GM12878 (cell line): ENCODE measurements at regions of chr16 and their contacts with region 1.

Region 1: GRCh38 chr16:58853854-58854791 is 120.0 kb upstream of the GOT2 start:
- DNase-seq: peak; percentile 46
- ATAC-seq: peak; percentile 93
- H3K4me3 ChIP-seq: no peak overlapping the region
- H3K27ac ChIP-seq: peak overlapping the region; percentile 50
- H3K4me1 ChIP-seq: peaks cover 7% of the 10 kb centered on the region
- H3K27me3 ChIP-seq: no peaks in the 10 kb centered on the region
- CTCF ChIP-seq: no peak
- EP300 ChIP-seq: peak in 1 of 2 experiments; percentile 48; a peak in 1 of 4 replicates
- POLR2A ChIP-seq: no peak
- RAD21 ChIP-seq: no peak

Region 2: GRCh38 chr16:58789351-58789750 is 64.8 kb before region 1 on chr16:
- CTCF ChIA-PET with region 1: no interaction called
- POLR2A ChIA-PET with region 1: no interaction called
- RAD21 ChIA-PET with region 1: no interaction called
- SMC1A ChIA-PET with region 1: no interaction called
- in situ Hi-C with region 1: no loop called
- intact Hi-C with region 1: no loop called
- DNase-seq: no peak
- ATAC-seq: no peak
- H3K4me3 ChIP-seq: no peak overlapping the region
- H3K27ac ChIP-seq: no peak overlapping the region
- H3K4me1 ChIP-seq: no peaks in the 10 kb centered on the region
- H3K27me3 ChIP-seq: no peaks in the 10 kb centered on the region
- CTCF ChIP-seq: no peak
- EP300 ChIP-seq: no peak
- POLR2A ChIP-seq: no peak
- RAD21 ChIP-seq: no peak

Region 3: DNA sequence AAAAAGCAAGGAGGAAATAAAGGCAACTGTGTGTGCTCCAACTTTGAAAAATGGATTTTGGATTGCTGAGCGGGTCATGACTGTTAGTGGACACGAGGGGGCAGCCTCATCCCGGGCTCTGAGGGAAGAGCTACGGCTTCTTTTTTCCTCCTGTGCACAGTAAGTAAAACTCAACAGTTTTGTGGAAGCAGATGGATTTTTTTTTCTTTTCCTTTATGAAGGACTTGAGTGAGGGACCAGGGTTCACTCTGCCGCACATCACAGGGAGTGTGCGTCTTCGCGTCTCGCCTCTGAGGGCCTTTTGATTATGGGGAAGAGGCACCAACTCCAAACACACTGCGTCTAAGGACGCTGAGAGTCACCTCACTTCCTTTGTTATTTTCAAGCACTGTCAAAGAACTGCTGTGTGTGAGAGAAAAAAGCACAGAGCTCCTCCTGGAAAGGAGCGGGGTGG is 39.7 kb before region 1 on chr16:
- CTCF ChIA-PET with region 1: interaction called, 11 read pairs
- POLR2A ChIA-PET with region 1: no interaction called
- RAD21 ChIA-PET with region 1: interaction called, 3 read pairs
- SMC1A ChIA-PET with region 1: interaction called, 5 read pairs
- in situ Hi-C with region 1: no loop called
- intact Hi-C with region 1: no loop called
- DNase-seq: no peak
- ATAC-seq: peak; percentile 87
- H3K4me3 ChIP-seq: no peak overlapping the region
- H3K27ac ChIP-seq: no peak overlapping the region
- H3K4me1 ChIP-seq: no peaks in the 10 kb centered on the region
- H3K27me3 ChIP-seq: no peaks in the 10 kb centered on the region
- CTCF ChIP-seq: peak; percentile 85 to 88 (median 88)
- EP300 ChIP-seq: no peak
- POLR2A ChIP-seq: no peak
- RAD21 ChIP-seq: peak; percentile 88

Region 4: GRCh38 chr16:58882292-58882691 is 28.2 kb after region 1 on chr16:
- CTCF ChIA-PET with region 1: interaction called, 44 read pairs
- POLR2A ChIA-PET with region 1: interaction called, 15 read pairs
- RAD21 ChIA-PET with region 1: interaction called, 76 read pairs
- SMC1A ChIA-PET with region 1: interaction called, 124 read pairs
- in situ Hi-C with region 1: no loop called
- intact Hi-C with region 1: loop called (anchors 1 kb)
- DNase-seq: peak; percentile 31
- ATAC-seq: peak; percentile 96
- H3K4me3 ChIP-seq: no peak overlapping the region
- H3K27ac ChIP-seq: no peak overlapping the region
- H3K4me1 ChIP-seq: peaks cover 5% of the 10 kb centered on the region; the same call in 1 of the 2 replicates
- H3K27me3 ChIP-seq: no peaks in the 10 kb centered on the region
- CTCF ChIP-seq: no peak
- EP300 ChIP-seq: peak in 1 of 2 experiments; percentile 69; a peak in 1 of 4 replicates
- POLR2A ChIP-seq: no peak
- RAD21 ChIP-seq: no peak

Region 5: DNA sequence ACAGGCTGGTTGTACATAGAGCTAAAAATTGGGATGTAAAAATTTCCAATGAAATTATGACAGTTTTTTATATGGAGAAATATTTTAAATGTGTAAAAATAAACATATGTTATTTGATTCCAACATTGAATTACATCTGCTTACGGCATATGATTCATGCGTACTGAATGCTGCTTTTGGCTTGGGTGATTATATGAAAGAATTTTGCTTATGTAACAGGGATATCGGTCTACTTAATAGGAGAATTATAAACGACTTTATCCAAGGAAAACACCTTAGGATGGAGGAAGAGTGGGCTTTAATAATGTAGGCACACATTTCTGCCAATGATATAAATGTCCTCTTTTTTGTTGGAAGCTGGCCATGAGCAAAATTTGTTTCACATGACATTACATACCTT is 77.3 kb after region 1 on chr16:
- CTCF ChIA-PET with region 1: no interaction called
- POLR2A ChIA-PET with region 1: no interaction called
- RAD21 ChIA-PET with region 1: interaction called, 4 read pairs
- SMC1A ChIA-PET with region 1: interaction called, 11 read pairs
- in situ Hi-C with region 1: no loop called
- intact Hi-C with region 1: no loop called
- DNase-seq: no peak
- ATAC-seq: no peak
- H3K4me3 ChIP-seq: no peak overlapping the region
- H3K27ac ChIP-seq: no peak overlapping the region
- H3K4me1 ChIP-seq: no peaks in the 10 kb centered on the region
- H3K27me3 ChIP-seq: no peaks in the 10 kb centered on the region
- CTCF ChIP-seq: no peak
- EP300 ChIP-seq: no peak
- POLR2A ChIP-seq: no peak
- RAD21 ChIP-seq: no peak

Region 6: DNA sequence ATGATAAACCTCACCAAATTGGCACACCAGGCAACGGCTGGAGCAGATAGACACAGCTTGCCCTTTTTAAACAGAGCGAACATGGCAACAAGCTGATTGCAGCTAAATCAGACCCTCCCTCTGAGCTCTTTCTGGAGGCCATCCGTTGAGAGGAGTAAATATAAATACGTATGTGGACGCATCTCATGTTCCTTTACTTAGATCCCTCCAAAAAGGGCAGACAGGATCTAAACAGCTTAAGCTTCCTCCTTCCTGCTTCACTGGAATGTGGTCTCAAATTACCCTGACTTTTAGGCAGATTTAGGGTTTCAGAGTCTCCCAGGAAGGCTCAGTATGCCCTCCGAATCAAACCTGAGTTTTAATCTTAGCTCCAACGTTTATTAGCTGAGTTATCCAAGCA is 84.7 kb after region 1 on chr16:
- CTCF ChIA-PET with region 1: interaction called, 3 read pairs
- POLR2A ChIA-PET with region 1: interaction called, 3 read pairs
- RAD21 ChIA-PET with region 1: interaction called, 11 read pairs
- SMC1A ChIA-PET with region 1: interaction called, 31 read pairs
- in situ Hi-C with region 1: no loop called
- intact Hi-C with region 1: loop called (anchors 5 kb)
- DNase-seq: no peak
- ATAC-seq: no peak
- H3K4me3 ChIP-seq: no peak overlapping the region
- H3K27ac ChIP-seq: no peak overlapping the region
- H3K4me1 ChIP-seq: no peaks in the 10 kb centered on the region
- H3K27me3 ChIP-seq: no peaks in the 10 kb centered on the region
- CTCF ChIP-seq: no peak
- EP300 ChIP-seq: no peak
- POLR2A ChIP-seq: no peak
- RAD21 ChIP-seq: no peak